Right ventricle myocardium inferior (tissue), 1 donor: ENCODE measurements at regions of chr12 and their contacts with region 1.

Region 1: GRCh38 chr12:131912518-131913294 is 16.4 kb upstream of the PUS1 start:
- DNase-seq: peak; percentile 93
- ATAC-seq: peak; percentile 86

Region 2: DNA sequence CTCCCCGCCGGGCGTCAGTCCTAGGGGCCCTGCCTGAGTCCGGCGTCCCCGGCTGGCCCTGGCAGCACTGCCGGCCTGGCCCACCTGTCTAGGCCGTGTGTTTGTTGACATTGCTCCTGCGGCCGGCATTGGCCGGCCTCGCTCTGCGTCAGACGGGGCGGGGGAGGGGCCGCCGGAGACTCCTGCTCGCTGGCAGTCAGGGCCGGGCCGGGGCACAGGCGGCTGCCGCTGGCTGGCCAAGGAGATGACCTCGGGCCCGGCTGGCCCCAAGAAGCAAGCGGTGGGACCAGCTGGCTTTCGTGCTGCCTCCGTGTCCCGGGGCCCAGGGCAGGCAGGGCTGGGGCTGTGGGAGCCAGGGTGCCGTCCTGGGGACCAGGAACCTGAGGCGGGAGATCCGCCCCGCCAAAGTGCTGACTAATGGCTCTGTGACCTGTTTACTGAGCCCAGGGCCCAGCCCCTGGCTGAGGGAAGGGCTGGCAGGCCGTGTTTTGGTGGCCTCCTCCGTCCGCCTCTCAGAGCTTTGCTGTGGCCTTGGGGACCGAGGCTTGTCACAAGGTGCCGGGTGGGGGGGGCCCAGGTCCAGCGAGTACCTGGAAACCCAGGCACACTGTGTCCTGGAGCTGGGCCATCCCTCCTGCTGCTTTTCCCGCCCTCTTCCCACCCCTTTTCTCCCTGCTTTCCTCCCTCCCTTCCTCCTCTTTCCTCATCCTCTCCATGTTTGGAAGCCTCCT is 16.5 kb before region 1 on chr12:
- intact Hi-C with region 1: loop called (anchors 2 kb)
- DNase-seq: peak; percentile 95
- ATAC-seq: peak; percentile 91

Region 3: GRCh38 chr12:131949431-131950181 is 36.9 kb after region 1 on chr12 and contains the start of gene EP400:
- intact Hi-C with region 1: no loop called
- DNase-seq: peak; percentile 98
- ATAC-seq: peak; percentile 99
- total RNA-seq, gene EP400: 13.9 TPM